ENCODE measurements at regions of chr6 and their contacts with region 1.

Region 1: DNA sequence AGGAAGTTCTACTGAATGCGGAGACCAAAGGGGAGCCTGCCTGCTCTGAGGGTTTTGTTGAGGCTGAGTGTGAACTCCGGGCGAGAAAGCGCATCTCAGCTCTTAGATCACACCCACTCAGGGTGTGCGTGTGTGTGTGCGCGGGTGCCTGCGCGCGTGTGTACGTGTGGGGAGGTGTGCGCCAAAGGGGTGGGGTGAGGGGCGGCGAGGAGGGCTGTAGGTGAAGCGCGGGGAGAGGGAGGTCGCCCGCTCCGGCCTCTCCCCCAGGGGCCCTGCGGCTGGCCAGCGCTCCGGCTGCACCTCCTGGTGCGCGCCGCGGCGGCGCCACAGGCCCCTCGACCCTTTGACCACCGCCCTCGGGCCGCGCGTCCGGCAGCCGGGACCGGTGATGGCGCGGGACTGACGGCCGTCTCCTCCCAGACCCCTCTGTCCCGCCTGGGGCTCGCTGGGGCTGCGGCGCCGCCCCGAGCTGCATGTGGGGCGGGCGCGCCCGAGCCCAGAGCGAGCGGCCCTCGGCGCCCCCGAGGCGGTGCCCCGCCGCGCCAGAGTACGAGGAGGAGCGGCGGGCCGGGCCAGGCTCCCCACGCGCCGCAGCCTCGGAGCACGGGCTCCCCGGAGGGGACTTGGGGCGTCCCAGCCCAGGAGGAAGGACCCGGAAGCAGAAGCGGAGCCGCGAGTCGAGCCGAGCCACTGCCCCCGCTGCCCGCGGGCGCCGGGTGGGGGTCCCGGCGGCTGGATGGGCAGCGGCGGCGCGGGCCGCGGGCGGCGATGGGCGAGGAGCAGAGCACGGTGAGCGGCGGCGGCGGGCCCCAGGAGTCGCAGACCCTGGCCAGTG is at the start of gene RNF217:
- DNase-seq: peak; percentile 75
- H3K4me3 ChIP-seq: peak within 1 kb of the TSS; percentile 75 to 95 (median 93)
- H3K27ac ChIP-seq: peak within 1 kb of the TSS; percentile 69
- H3K4me1 ChIP-seq: peaks cover 40% of the 10 kb centered on the region
- H3K27me3 ChIP-seq: no peaks in the 10 kb centered on the region
- CTCF ChIP-seq: no peak
- POLR2A ChIP-seq: no peak
- total RNA-seq, gene RNF217: 32.5 and 33.1 TPM in 2 replicates

Region 2: GRCh38 chr6:124882580-124883393 is 79.2 kb before region 1 on chr6:
- CTCF ChIA-PET with region 1: no interaction called
- POLR2A ChIA-PET with region 1: no interaction called
- dilution Hi-C with region 1: no loop called
- intact Hi-C with region 1: loop called (anchors 1 kb)
- DNase-seq: peak; percentile 73
- H3K4me3 ChIP-seq: peak overlapping the region in 1 of 3 experiments; percentile 6
- H3K27ac ChIP-seq: no peak overlapping the region
- H3K4me1 ChIP-seq: peaks cover 20% of the 10 kb centered on the region
- H3K27me3 ChIP-seq: no peaks in the 10 kb centered on the region
- CTCF ChIP-seq: no peak
- POLR2A ChIP-seq: no peak

Region 3: GRCh38 chr6:124984668-124985338 is 22.8 kb after region 1 on chr6:
- CTCF ChIA-PET with region 1: no interaction called
- POLR2A ChIA-PET with region 1: no interaction called
- dilution Hi-C with region 1: no loop called
- intact Hi-C with region 1: loop called (anchors 1 kb)
- DNase-seq: peak; percentile 79
- H3K4me3 ChIP-seq: no peak overlapping the region
- H3K27ac ChIP-seq: peak overlapping the region; percentile 78
- H3K4me1 ChIP-seq: peaks cover 27% of the 10 kb centered on the region
- H3K27me3 ChIP-seq: no peaks in the 10 kb centered on the region
- CTCF ChIP-seq: no peak
- POLR2A ChIP-seq: no peak

Region 4: DNA sequence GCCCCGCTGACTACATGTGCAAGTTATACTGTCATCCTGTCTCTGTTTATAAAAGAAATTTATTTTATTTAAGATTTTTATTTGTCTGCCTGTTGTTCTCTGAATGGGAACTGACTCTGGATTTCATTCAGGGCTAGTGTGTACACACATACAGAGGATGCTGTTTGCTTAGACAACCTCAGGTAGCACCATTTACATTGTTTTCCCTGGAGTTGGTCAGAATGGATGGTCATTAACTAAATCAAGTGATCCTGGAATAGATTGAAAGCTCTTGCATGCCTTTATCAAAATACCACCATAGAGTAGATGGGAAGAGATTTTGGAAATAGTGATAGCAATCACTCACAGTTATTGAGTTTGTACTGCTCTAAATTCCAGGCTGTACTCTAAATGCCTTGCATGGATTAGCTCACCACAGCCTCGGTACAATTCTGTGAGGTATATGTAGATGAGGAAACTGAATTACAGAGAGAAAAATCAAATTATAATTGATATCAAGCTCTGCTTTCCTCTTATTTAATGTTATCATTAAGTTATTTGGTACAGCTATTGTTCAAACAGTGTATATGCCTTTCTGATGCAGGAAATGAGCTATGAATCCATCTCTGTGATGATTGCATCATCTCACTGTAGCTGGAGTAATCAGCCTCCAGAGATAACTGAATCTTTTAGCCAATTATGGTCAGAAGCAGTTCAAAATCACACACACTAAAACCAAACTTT is 52.1 kb after region 1 on chr6:
- CTCF ChIA-PET with region 1: interaction called, 3 read pairs
- POLR2A ChIA-PET with region 1: no interaction called
- dilution Hi-C with region 1: no loop called
- intact Hi-C with region 1: loop called (anchors 2 kb)
- DNase-seq: peak; percentile 48
- H3K4me3 ChIP-seq: no peak overlapping the region
- H3K27ac ChIP-seq: no peak overlapping the region
- H3K4me1 ChIP-seq: peaks cover 10% of the 10 kb centered on the region
- H3K27me3 ChIP-seq: no peaks in the 10 kb centered on the region
- CTCF ChIP-seq: no peak
- POLR2A ChIP-seq: no peak

Region 5: DNA sequence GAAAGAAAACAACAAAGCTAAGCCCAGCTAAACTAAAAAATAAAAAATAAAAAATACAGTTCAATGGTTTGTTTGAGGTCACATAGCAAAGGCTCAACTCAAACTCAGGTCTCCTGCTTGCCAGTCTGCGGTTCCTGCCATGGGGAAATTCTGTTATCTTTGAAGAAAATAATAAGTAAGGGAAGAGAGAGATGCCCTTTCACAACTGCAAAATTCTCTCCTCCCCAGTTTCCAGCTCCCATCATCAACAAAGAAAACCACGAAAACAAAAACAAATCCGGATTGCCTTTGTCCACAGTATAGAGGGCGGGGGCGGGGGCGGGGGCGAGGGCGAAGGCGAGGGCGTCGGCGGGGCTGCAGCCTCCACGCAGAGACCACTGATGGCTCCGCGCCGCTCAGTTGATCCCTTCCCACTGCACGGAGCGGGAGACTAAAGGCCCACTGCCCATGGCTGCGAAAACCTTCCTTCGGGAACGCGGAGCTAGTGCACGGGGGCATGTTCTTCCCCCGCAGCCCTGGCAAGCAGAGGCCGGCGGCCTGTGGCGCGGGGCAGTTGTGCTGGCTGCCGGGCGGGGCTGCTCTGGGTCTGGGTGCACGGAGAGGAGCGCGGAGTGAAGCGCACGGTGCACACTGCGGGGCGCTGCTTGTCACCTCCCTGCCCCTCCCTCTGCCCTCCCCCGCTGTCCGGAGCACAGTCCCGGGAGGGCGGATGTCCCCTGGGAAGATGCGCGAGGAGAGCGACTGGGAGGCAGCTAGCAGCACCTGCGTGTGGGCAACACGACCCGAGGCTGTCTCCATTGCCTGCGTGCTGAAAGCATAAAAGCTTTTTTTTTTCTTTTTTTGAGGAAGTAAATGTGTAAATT is 137.4 kb after region 1 on chr6:
- CTCF ChIA-PET with region 1: interaction called, 4 read pairs
- POLR2A ChIA-PET with region 1: interaction called, 5 read pairs
- dilution Hi-C with region 1: no loop called
- intact Hi-C with region 1: loop called (anchors 1 kb)
- DNase-seq: peak; percentile 60
- H3K4me3 ChIP-seq: peak overlapping the region; percentile 58 to 80 (median 63)
- H3K27ac ChIP-seq: peak overlapping the region; percentile 32
- H3K4me1 ChIP-seq: peaks cover 23% of the 10 kb centered on the region
- H3K27me3 ChIP-seq: no peaks in the 10 kb centered on the region
- CTCF ChIP-seq: no peak
- POLR2A ChIP-seq: no peak

Region 6: GRCh38 chr6:125301435-125302391 is 339.7 kb after region 1 on chr6 and contains the start of gene HDDC2:
- CTCF ChIA-PET with region 1: no interaction called
- POLR2A ChIA-PET with region 1: no interaction called
- dilution Hi-C with region 1: no loop called
- intact Hi-C with region 1: loop called (anchors 2 kb)
- DNase-seq: peak; percentile 78
- H3K4me3 ChIP-seq: peak within 1 kb of the TSS; percentile 10 to 56 (median 47)
- H3K27ac ChIP-seq: peak within 1 kb of the TSS; percentile 72
- H3K4me1 ChIP-seq: peaks cover 10% of the 10 kb centered on the region
- H3K27me3 ChIP-seq: peaks cover 8 to 12% of the 10 kb centered on the region in 2 experiments
- CTCF ChIP-seq: no peak
- POLR2A ChIP-seq: peak; percentile 49
- total RNA-seq, gene HDDC2: 12.6 and 13.6 TPM in 2 replicates